Caco-2 (cell line): ENCODE measurements at regions of chr10 and their contacts with region 1.

Region 1: GRCh38 chr10:94362360-94363250 is at the start of gene NOC3L:
- DNase-seq: peak; percentile 97 to 98
- H3K4me3 ChIP-seq: peak within 1 kb of the TSS; percentile 67
- H3K4me3 Mint-ChIP-seq: peak within 1 kb of the TSS; percentile 89
- H3K27ac Mint-ChIP-seq: peak within 1 kb of the TSS; percentile 84
- H3K4me1 ChIP-seq: peaks cover 17% of the 10 kb centered on the region
- H3K4me1 Mint-ChIP-seq: peaks cover 17% of the 10 kb centered on the region
- H3K27me3 ChIP-seq: no peaks in the 10 kb centered on the region
- H3K27me3 Mint-ChIP-seq: no peaks in the 10 kb centered on the region
- CTCF ChIP-seq: peak; percentile 81 to 89
- total RNA-seq, gene NOC3L: 39.9 and 42.3 TPM in 2 replicates

Region 2: GRCh38 chr10:94402015-94402842 is 39.6 kb after region 1 on chr10 and contains the start of gene TBC1D12:
- CTCF ChIA-PET with region 1: interaction called, 9 read pairs
- POLR2A ChIA-PET with region 1: interaction called, 12 read pairs
- intact Hi-C with region 1: loop called (anchors 1 kb)
- DNase-seq: peak; percentile 98
- H3K4me3 ChIP-seq: peak within 1 kb of the TSS; percentile 97
- H3K4me3 Mint-ChIP-seq: peak within 1 kb of the TSS; percentile 78
- H3K27ac Mint-ChIP-seq: peak within 1 kb of the TSS; percentile 92
- H3K4me1 ChIP-seq: peaks cover 45% of the 10 kb centered on the region
- H3K4me1 Mint-ChIP-seq: peaks cover 38% of the 10 kb centered on the region
- H3K27me3 ChIP-seq: no peaks in the 10 kb centered on the region
- H3K27me3 Mint-ChIP-seq: no peaks in the 10 kb centered on the region
- CTCF ChIP-seq: no peak
- total RNA-seq, gene TBC1D12: 32.1 and 33.8 TPM in 2 replicates

Region 3: GRCh38 chr10:94500063-94500462 is 137.5 kb after region 1 on chr10:
- CTCF ChIA-PET with region 1: no interaction called
- POLR2A ChIA-PET with region 1: no interaction called
- intact Hi-C with region 1: loop called (anchors 2 kb)
- DNase-seq: peak in 1 of 2 experiments; percentile 31
- H3K4me3 ChIP-seq: no peak overlapping the region
- H3K4me3 Mint-ChIP-seq: no peak overlapping the region
- H3K27ac Mint-ChIP-seq: no peak overlapping the region
- H3K4me1 ChIP-seq: no peaks in the 10 kb centered on the region
- H3K4me1 Mint-ChIP-seq: no peaks in the 10 kb centered on the region
- H3K27me3 ChIP-seq: no peaks in the 10 kb centered on the region
- H3K27me3 Mint-ChIP-seq: no peaks in the 10 kb centered on the region
- CTCF ChIP-seq: peak; percentile 39 to 59